Activated CD4-positive, alpha-beta memory T cell treated with anti-CD3 and anti-CD28 coated beads for 36 hours (primary cell): ENCODE measurements at regions of chr7 and their contacts with region 1.

Region 1: DNA sequence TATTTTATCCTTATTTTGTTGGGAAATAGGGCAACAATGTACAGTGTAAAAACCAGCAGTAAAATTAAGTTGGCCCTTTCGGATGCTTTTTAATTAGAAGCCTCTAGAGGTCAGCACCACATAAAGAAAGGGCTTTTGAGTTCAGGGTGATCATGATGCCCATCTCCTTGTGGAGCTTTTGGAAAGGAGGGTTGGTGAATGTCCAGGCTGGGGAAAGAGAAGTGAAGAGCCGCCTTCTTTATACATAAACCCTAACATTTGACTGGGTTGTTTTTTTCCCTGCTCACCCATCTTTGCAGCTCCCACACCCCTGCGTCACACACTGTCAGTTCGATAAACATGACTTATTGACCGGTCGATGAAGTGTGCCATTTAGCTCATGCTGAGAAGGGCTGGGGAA is 29.8 kb downstream of the MTURN start:
- DNase-seq: no peak
- H3K4me3 Mint-ChIP-seq: no peak overlapping the region
- H3K27ac Mint-ChIP-seq: no peak overlapping the region
- H3K4me1 Mint-ChIP-seq: peaks cover 24% of the 10 kb centered on the region
- H3K27me3 Mint-ChIP-seq: no peaks in the 10 kb centered on the region

Region 2: DNA sequence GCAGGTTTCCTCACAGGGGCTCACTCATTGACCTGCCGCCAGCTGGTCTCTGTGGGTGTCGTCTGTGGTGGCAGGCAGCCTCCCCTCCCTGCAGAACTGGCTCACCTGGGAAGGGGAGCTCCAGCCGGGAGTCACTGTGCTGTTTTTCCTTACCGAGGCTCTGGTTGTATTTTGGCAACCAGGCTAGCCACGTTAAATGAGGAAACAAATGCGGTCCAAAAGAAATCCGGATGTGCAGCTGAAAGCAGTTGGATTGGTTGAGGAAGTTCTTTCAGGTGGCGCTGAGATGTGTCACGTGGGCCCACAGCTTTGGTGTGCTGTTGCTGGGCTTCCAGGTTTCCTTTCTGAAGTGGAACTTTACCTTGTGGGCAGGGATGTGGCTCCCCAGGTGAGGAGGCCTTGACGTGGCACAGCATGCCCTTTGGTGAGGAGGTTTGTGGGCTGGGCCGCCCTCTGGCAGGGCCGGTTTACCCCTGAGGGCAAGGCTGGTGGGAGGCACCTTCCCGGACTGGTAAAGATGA is 15.6 kb before region 1 on chr7:
- CTCF ChIA-PET with region 1: no interaction called
- POLR2A ChIA-PET with region 1: no interaction called
- intact Hi-C with region 1: loop called (anchors 2 kb)
- DNase-seq: peak; percentile 51
- H3K4me3 Mint-ChIP-seq: no peak overlapping the region
- H3K27ac Mint-ChIP-seq: no peak overlapping the region
- H3K4me1 Mint-ChIP-seq: no peaks in the 10 kb centered on the region
- H3K27me3 Mint-ChIP-seq: no peaks in the 10 kb centered on the region

Region 3: GRCh38 chr7:30238721-30239441 is 74.3 kb after region 1 on chr7:
- CTCF ChIA-PET with region 1: interaction called, 4 read pairs
- POLR2A ChIA-PET with region 1: no interaction called
- intact Hi-C with region 1: loop called (anchors 5 kb)
- DNase-seq: peak; percentile 69
- H3K4me3 Mint-ChIP-seq: no peak overlapping the region
- H3K27ac Mint-ChIP-seq: no peak overlapping the region
- H3K4me1 Mint-ChIP-seq: peaks cover 7% of the 10 kb centered on the region
- H3K27me3 Mint-ChIP-seq: peaks cover 9% of the 10 kb centered on the region

Region 4: GRCh38 chr7:30412810-30413504 is 248.4 kb after region 1 on chr7:
- CTCF ChIA-PET with region 1: interaction called, 7 read pairs
- POLR2A ChIA-PET with region 1: no interaction called
- intact Hi-C with region 1: loop called (anchors 5 kb)
- DNase-seq: no peak
- H3K4me3 Mint-ChIP-seq: no peak overlapping the region
- H3K27ac Mint-ChIP-seq: no peak overlapping the region
- H3K4me1 Mint-ChIP-seq: no peaks in the 10 kb centered on the region
- H3K27me3 Mint-ChIP-seq: no peaks in the 10 kb centered on the region